ENCODE measurements at regions of chr19 and their contacts with region 1.

Region 1: GRCh38 chr19:3324321-3324856 is 42.0 kb upstream of the NFIC start:
- DNase-seq: no peak
- H3K4me3 ChIP-seq: no peak overlapping the region
- H3K27ac ChIP-seq: no peak overlapping the region
- H3K4me1 ChIP-seq: no peaks in the 10 kb centered on the region
- H3K27me3 ChIP-seq: no peaks in the 10 kb centered on the region
- CTCF ChIP-seq: peak; percentile 69 to 80

Region 2: GRCh38 chr19:3029065-3029923 is 295.1 kb before region 1 on chr19 and contains the start of gene TLE2:
- CTCF ChIA-PET with region 1: no interaction called
- dilution Hi-C with region 1: loop called (anchors 5 kb)
- in situ Hi-C with region 1: no loop called
- intact Hi-C with region 1: no loop called
- DNase-seq: no peak
- H3K4me3 ChIP-seq: peak within 1 kb of the TSS; percentile 38 to 49 (median 41)
- H3K27ac ChIP-seq: no peak within 1 kb of the TSS
- H3K4me1 ChIP-seq: peaks cover 1% of the 10 kb centered on the region
- H3K27me3 ChIP-seq: peaks cover 4% of the 10 kb centered on the region
- CTCF ChIP-seq: no peak
- total RNA-seq, gene TLE2: 4.8 to 7.2 TPM

Region 3: GRCh38 chr19:3275583-3276340 is 48.6 kb before region 1 on chr19:
- CTCF ChIA-PET with region 1: no interaction called
- dilution Hi-C with region 1: loop called (anchors 5 kb)
- in situ Hi-C with region 1: no loop called
- intact Hi-C with region 1: no loop called
- DNase-seq: peak; percentile 83
- H3K4me3 ChIP-seq: peak overlapping the region; percentile 35 to 60 (median 52)
- H3K27ac ChIP-seq: no peak overlapping the region
- H3K4me1 ChIP-seq: peaks cover 9% of the 10 kb centered on the region
- H3K27me3 ChIP-seq: no peaks in the 10 kb centered on the region
- CTCF ChIP-seq: no peak

Region 4: GRCh38 chr19:3429581-3430080 is 105.2 kb after region 1 on chr19:
- CTCF ChIA-PET with region 1: interaction called, 3 read pairs
- dilution Hi-C with region 1: no loop called
- in situ Hi-C with region 1: loop called in 1 of 2 experiments (anchors 10 kb)
- intact Hi-C with region 1: loop called (anchors 1 kb)
- DNase-seq: peak; percentile 48
- H3K4me3 ChIP-seq: no peak overlapping the region
- H3K27ac ChIP-seq: peak overlapping the region; percentile 38
- H3K4me1 ChIP-seq: peaks cover 11% of the 10 kb centered on the region
- H3K27me3 ChIP-seq: no peaks in the 10 kb centered on the region
- CTCF ChIP-seq: peak; percentile 82 to 94

Region 5: DNA sequence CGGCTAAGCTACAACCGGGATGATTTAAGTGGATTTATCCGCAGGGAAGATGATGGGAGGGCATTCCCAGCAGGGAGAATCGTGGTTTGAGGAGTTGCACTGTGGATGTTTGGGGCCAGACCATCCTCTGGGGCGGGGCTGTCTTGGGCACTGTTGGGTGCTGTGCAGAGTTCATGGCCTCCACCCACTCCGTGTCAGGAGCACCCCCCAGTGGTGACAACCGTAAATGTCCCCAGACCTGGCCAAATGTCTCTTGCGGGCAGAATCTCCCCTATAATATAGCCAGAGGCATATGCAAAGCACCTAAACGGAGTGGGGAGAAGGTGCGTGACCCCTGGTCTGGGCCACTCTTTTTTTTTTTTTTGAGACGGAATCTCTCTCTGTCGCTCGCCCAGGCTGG is 115.7 kb after region 1 on chr19:
- CTCF ChIA-PET with region 1: no interaction called
- dilution Hi-C with region 1: no loop called
- in situ Hi-C with region 1: loop called in 1 of 2 experiments (anchors 10 kb)
- intact Hi-C with region 1: loop called (anchors 1 kb)
- DNase-seq: no peak
- H3K4me3 ChIP-seq: no peak overlapping the region
- H3K27ac ChIP-seq: no peak overlapping the region
- H3K4me1 ChIP-seq: peaks cover 3% of the 10 kb centered on the region
- H3K27me3 ChIP-seq: no peaks in the 10 kb centered on the region
- CTCF ChIP-seq: peak; percentile 33 to 57

Region 6: DNA sequence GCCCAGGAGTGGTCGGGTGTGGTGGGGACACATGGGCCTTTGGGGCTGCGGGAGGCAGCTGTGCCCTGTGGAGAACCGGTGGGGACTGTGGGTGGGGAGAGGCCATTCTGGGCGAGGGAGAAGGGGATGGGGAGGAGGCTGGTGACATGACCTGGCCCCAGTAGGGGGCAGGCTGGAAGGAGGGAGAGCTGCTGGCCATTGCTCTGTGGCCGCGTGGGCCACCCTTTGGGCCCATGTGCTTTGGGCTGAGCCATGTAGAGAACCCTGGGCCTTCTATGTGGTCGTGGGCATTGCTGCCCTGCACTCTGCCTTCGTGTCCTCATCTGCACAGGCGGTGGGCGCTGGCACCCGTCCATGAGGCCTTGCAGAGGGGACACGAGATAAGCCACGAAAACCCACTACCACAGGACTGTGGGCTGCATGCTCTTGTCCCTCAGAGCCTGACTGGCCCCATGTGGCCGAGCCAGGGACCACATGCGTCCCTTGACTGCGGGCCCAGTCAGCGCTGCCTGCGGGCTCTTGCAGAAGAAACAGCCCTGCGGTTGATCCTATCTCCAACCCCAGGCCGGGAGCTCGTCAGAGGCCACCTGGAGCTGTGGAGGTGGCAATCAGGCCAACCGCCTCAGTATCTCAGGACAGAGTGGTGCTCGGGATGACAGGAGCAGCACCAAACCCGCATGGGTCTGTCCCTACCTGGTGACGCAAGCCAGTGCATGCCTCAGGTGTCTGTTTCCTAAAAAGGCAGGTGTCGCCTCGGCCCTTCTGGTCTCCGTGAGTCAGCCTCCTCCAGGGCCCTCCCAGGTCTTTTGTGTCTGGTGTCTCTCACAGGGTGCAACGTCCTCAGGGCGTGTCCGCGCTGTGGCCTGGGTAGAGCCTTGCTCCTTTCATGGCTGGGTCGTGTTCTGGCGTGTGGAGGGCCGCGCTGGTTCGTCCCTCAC is 196.0 kb after region 1 on chr19:
- CTCF ChIA-PET with region 1: no interaction called
- dilution Hi-C with region 1: loop called (anchors 5 kb)
- in situ Hi-C with region 1: no loop called
- intact Hi-C with region 1: no loop called
- DNase-seq: peak; percentile 95
- H3K4me3 ChIP-seq: peak overlapping the region in 2 of 3 experiments; percentile 0 to 2
- H3K27ac ChIP-seq: peak overlapping the region; percentile 49
- H3K4me1 ChIP-seq: peaks cover 18% of the 10 kb centered on the region
- H3K27me3 ChIP-seq: no peaks in the 10 kb centered on the region
- CTCF ChIP-seq: peak; percentile 27 to 43

Region 7: GRCh38 chr19:3700221-3701032 is 376.0 kb after region 1 on chr19 and contains the start of gene PIP5K1C:
- CTCF ChIA-PET with region 1: no interaction called
- dilution Hi-C with region 1: no loop called
- in situ Hi-C with region 1: no loop called
- intact Hi-C with region 1: loop called (anchors 10 kb)
- DNase-seq: peak; percentile 73
- H3K4me3 ChIP-seq: peak within 1 kb of the TSS; percentile 55 to 97 (median 87)
- H3K27ac ChIP-seq: peak within 1 kb of the TSS; percentile 37
- H3K4me1 ChIP-seq: no peaks in the 10 kb centered on the region
- H3K27me3 ChIP-seq: no peaks in the 10 kb centered on the region
- CTCF ChIP-seq: peak; percentile 66 to 79
- total RNA-seq, gene PIP5K1C: 22.5 to 26.7 TPM